ENCODE measurements at regions of chr16 and their contacts with region 1.

Region 1: DNA sequence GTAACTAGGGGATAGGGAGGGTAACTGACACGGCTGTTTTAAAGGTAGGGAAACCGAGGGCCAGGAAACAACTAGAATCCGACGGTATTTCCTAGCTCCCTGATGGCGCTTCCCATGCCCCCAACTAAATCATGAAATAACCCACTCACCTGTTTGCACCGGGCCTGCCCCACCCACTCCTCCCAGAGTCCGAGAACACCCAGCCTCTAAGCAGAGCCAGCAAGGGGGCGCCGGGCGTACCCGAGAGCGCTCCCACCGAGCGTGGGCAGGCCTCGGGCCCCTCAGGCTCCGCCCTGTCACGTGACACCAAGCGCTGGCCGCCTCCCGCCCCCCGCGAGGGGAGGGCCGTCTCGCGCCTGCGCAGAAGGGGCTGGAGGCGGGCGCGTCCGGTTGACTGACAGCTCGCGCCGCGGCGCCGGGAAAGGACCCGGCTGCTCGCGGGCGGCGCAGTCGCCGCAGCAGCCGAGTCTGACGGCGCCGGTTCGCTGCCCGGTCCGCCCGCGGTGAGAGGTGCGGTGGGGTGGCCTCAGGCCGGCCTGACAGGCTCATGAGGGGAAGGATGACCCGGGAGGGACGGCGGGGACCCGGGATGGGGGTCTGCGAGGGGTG is at the start of gene KIAA0513:
- H3K4me3 Mint-ChIP-seq: peak within 1 kb of the TSS; percentile 98
- H3K27ac Mint-ChIP-seq: peak within 1 kb of the TSS; percentile 99
- H3K4me1 Mint-ChIP-seq: peaks cover 65% of the 10 kb centered on the region
- H3K27me3 Mint-ChIP-seq: no peaks in the 10 kb centered on the region

Region 2: GRCh38 chr16:84985079-84986065 is 42.1 kb before region 1 on chr16:
- intact Hi-C with region 1: loop called (anchors 5 kb)
- H3K4me3 Mint-ChIP-seq: no peak overlapping the region
- H3K27ac Mint-ChIP-seq: peak overlapping the region; percentile 89
- H3K4me1 Mint-ChIP-seq: peaks cover 89% of the 10 kb centered on the region
- H3K27me3 Mint-ChIP-seq: no peaks in the 10 kb centered on the region

Measured in dendritic cell treated with granulocyte-macrophage colony-stimulating factor and Interleukin-4, amounts not matched to agents 40 ng/mL and 50 ng/mL, for 4 days (primary cell).